H1 (cell line): ENCODE measurements at regions of chr7 and their contacts with region 1.

Region 1: DNA sequence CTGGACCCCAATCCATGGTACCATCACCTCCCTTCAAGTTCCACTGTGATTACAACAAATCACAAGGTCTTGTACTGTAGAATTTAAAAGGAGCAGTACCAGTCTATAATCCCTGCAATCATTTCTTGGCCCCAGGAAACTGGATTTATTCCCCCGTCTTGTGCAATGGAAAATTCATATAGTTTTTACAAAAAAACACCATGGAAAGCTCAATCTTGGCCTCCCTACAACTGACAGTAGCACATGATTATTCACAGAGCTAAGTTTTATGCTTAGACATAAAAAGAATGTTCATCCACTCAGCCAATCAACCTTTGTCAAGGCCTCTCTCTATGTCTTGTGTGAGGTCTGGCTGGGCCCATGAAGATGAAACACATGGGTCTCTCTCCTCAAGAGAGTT is 10.2 kb downstream of the DGKI start:
- DNase-seq: no peak
- H3K4me3 ChIP-seq: no peak overlapping the region
- H3K27ac ChIP-seq: no peak overlapping the region
- H3K4me1 ChIP-seq: peaks cover 4 to 14% (median 10%) of the 10 kb centered on the region in 4 experiments; a peak in 4 of 7 replicates
- H3K27me3 ChIP-seq: no peaks in the 10 kb centered on the region
- CTCF ChIP-seq: no peak
- EP300 ChIP-seq: no peak
- POLR2A ChIP-seq: no peak
- RAD21 ChIP-seq: no peak

Region 2: GRCh38 chr7:137820677-137821420 is 15.7 kb before region 1 on chr7:
- CTCF ChIA-PET with region 1: interaction called, 11 read pairs
- POLR2A ChIA-PET with region 1: no interaction called
- DNase-seq: peak in 1 of 2 experiments; percentile 59
- H3K4me3 ChIP-seq: peak overlapping the region in 2 of 4 experiments; percentile 7 to 14; a peak in 4 of 8 replicates
- H3K27ac ChIP-seq: no peak overlapping the region
- H3K4me1 ChIP-seq: peaks cover 7 to 15% (median 10%) of the 10 kb centered on the region in 4 experiments
- H3K27me3 ChIP-seq: no peaks in the 10 kb centered on the region
- CTCF ChIP-seq: no peak
- EP300 ChIP-seq: no peak
- POLR2A ChIP-seq: no peak
- RAD21 ChIP-seq: no peak